ENCODE measurements at regions of chr20 and their contacts with region 1.

Region 1: DNA sequence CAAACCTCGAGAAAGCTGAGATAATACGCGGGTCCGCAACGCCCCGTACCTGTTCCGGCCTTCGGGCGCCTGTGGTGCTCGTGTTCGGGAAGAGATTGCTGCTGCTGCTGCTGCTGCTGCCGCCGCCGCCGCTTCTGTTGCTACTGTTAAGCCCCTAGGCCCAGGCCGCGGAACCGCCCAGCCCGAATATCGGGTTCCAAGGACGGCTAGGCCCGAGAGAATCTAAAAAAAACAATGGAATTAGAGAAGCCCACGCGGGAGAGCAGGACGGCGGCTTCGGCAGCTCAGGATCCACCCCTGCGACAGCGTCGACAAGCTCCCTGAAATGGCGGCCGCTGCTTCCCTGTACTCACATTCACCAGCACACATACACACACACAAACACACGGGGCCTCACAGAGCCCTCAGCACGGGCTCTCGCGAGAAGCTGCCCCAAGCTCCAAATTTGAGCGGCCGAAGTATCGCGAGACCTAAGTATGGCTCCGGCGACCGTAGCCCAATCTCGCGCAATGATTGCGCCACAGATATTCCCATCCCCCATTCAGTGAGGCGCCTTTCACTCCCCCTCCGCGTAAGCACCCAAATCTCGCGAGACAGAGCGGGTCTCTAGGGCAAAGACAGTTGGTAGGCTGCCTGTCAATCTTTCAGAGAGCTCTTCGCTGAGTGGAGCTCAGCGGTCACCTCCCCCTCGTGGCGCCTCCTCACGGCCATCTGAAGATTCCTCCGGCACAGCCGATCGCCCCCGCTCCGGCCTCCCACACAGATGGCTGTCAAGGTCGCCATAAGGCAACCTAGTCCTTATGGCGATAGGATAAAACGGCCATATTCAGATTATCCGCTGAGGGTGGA is at the start of gene RBM39:
- DNase-seq: peak; percentile 96 to 100 (median 99)
- ATAC-seq: peak; percentile 80
- H3K4me3 ChIP-seq: peak within 1 kb of the TSS; percentile 84
- H3K4me3 Mint-ChIP-seq: peak within 1 kb of the TSS; percentile 99
- H3K27ac ChIP-seq: peak within 1 kb of the TSS; percentile 99 to 100
- H3K27ac Mint-ChIP-seq: peak within 1 kb of the TSS; percentile 99
- H3K4me1 ChIP-seq: peaks cover 44% of the 10 kb centered on the region
- H3K4me1 Mint-ChIP-seq: peaks cover 56% of the 10 kb centered on the region
- H3K27me3 ChIP-seq: no peaks in the 10 kb centered on the region
- H3K27me3 Mint-ChIP-seq: no peaks in the 10 kb centered on the region
- CTCF ChIP-seq: peak; percentile 57
- total RNA-seq, gene RBM39: 1,057 to 1,091 TPM

Region 2: DNA sequence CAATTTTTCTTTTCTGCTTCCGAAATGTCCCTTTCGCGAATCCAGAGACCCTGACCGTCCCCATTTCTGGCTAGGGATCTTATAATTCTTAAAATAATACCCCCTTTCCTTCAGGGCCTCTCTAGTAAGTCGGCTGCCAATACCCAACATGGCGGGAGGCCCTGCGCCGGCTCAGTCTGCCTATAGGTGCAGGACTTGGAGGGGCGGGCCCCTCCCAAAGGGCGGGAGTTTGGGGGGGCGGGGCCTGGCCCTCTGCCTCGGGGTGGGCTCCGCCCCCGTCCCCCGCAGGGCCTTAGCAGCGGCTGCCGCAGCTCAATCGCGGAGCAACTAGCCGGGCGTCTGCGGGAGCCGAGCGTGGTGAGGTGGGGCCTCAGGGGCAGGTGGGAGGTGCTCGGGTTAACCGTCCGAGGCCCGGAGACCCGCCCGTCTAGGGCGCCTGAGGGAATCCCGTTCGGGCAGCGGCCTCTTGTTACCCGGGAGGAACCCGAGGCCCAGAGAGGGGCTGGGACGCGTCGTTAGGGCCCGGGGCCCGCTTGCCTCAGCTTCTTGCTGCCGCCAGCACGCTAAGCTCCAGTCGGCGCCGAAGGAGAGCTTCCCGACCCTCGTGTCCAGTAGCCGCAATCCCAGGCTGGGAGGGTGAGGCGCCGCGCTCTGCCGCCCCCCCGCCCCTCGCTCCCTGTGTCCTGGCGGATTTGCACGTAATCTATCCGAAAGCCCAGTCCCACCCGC is 287.1 kb before region 1 on chr20 and contains the start of gene CEP250:
- CTCF ChIA-PET with region 1: no interaction called
- POLR2A ChIA-PET with region 1: interaction called, 27 read pairs
- intact Hi-C with region 1: loop called in 1 of 2 experiments (anchors 10 kb)
- DNase-seq: peak; percentile 87 to 97 (median 94)
- ATAC-seq: peak; percentile 96
- H3K4me3 ChIP-seq: peak within 1 kb of the TSS; percentile 91
- H3K4me3 Mint-ChIP-seq: peak within 1 kb of the TSS; percentile 97
- H3K27ac ChIP-seq: peak within 1 kb of the TSS; percentile 83 to 94
- H3K27ac Mint-ChIP-seq: peak within 1 kb of the TSS; percentile 87
- H3K4me1 ChIP-seq: peaks cover 19% of the 10 kb centered on the region
- H3K4me1 Mint-ChIP-seq: peaks cover 29% of the 10 kb centered on the region
- H3K27me3 ChIP-seq: no peaks in the 10 kb centered on the region
- H3K27me3 Mint-ChIP-seq: no peaks in the 10 kb centered on the region
- CTCF ChIP-seq: no peak
- total RNA-seq, gene CEP250: 27.6 to 33.1 TPM

Region 3: DNA sequence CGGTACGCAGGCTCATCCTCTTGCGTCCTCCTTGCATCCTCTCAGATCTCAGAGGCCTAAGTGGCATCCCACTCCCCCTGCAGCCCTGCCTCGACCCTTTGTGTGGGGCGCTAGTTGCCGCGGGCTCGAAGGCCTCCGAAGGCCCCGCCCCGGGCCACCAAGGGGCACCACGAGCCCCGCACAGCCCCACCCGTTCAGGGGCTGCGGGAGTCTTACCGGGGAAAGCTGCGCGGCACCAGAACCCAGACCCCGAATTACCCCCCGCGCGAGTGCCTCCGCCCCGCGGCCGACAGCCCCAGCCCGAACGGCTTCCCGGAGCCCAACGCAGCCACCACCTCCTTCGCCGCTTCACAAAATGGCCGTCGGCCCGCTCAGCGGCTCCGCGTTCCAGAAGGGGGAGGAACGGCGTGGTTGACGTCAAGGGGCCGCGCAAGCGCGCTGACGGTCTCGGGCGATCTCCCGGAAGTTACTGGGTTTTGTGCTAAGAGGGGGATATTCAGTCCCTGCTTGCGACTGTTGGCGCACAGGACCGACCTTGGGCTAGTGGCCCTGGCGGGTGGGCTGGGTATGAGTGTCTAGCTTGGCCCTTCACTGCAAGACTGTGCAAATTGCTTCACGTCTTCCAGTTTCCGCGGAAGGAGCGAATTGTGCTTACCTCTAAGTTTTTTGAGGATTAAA is 77.4 kb before region 1 on chr20 and contains the starts of genes CPNE1 and RBM12:
- CTCF ChIA-PET with region 1: interaction called, 6 read pairs
- POLR2A ChIA-PET with region 1: interaction called, 131 read pairs
- intact Hi-C with region 1: loop called (anchors 1 to 2 kb)
- DNase-seq: peak; percentile 87 to 97 (median 92)
- ATAC-seq: peak; percentile 67
- H3K4me3 ChIP-seq: peak within 1 kb of the TSS; percentile 97
- H3K4me3 Mint-ChIP-seq: peak within 1 kb of the TSS; percentile 89
- H3K27ac ChIP-seq: peak within 1 kb of the TSS; percentile 99
- H3K27ac Mint-ChIP-seq: peak within 1 kb of the TSS; percentile 99
- H3K4me1 ChIP-seq: peaks cover 37% of the 10 kb centered on the region
- H3K4me1 Mint-ChIP-seq: peaks cover 49% of the 10 kb centered on the region
- H3K27me3 ChIP-seq: no peaks in the 10 kb centered on the region
- H3K27me3 Mint-ChIP-seq: no peaks in the 10 kb centered on the region
- CTCF ChIP-seq: no peak
- total RNA-seq, gene CPNE1: 146 to 153 TPM
- total RNA-seq, gene RBM12: 91.7 to 95.2 TPM

Region 4: DNA sequence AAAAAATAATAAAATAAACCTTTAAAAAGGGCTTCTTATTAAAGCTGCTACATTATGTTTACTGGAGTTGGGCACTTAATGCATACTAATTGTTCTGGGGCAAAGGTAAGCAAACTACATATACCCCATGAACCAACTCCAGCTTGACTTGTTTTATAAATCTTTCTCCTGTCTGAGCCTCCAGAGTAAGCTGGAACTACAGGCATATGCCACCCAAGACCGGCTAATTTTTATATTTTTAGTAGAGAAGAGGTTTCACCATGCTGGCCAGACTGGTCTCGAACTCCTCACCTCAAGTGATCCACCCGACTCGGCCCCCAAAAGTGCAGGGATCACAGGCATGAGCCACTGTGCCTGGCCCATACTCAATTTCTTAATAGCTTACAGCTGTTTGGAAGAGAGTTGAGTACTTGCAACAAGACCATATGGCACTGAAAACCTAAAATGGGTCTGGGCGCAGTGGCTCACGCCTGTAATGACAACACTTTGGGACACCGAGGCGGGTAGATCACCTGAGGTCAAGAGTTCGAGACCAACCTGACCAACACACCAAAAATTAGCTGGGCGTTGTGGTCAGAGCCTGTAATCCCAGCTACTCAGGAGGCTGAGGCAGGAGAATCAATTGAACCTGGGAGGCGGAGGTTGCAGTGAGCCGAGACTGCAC is 23.0 kb before region 1 on chr20:
- CTCF ChIA-PET with region 1: interaction called, 6 read pairs
- POLR2A ChIA-PET with region 1: interaction called, 32 read pairs
- intact Hi-C with region 1: no loop called
- DNase-seq: no peak
- ATAC-seq: no peak
- H3K4me3 ChIP-seq: no peak overlapping the region
- H3K4me3 Mint-ChIP-seq: no peak overlapping the region
- H3K27ac ChIP-seq: no peak overlapping the region
- H3K27ac Mint-ChIP-seq: peak overlapping the region; percentile 27
- H3K4me1 ChIP-seq: peaks cover 53% of the 10 kb centered on the region
- H3K4me1 Mint-ChIP-seq: peaks cover 51% of the 10 kb centered on the region
- H3K27me3 ChIP-seq: no peaks in the 10 kb centered on the region
- H3K27me3 Mint-ChIP-seq: no peaks in the 10 kb centered on the region
- CTCF ChIP-seq: no peak

Region 5: GRCh38 chr20:35771689-35772562 is 29.8 kb after region 1 on chr20 and contains the start of gene PHF20:
- CTCF ChIA-PET with region 1: interaction called, 32 read pairs
- POLR2A ChIA-PET with region 1: interaction called, 891 read pairs
- intact Hi-C with region 1: loop called (anchors 1 kb)
- DNase-seq: peak; percentile 100
- ATAC-seq: peak; percentile 84
- H3K4me3 ChIP-seq: peak within 1 kb of the TSS; percentile 79
- H3K4me3 Mint-ChIP-seq: peak within 1 kb of the TSS; percentile 97
- H3K27ac ChIP-seq: peak within 1 kb of the TSS; percentile 86 to 96
- H3K27ac Mint-ChIP-seq: peak within 1 kb of the TSS; percentile 96
- H3K4me1 ChIP-seq: peaks cover 84% of the 10 kb centered on the region
- H3K4me1 Mint-ChIP-seq: peaks cover 75% of the 10 kb centered on the region
- H3K27me3 ChIP-seq: no peaks in the 10 kb centered on the region
- H3K27me3 Mint-ChIP-seq: no peaks in the 10 kb centered on the region
- CTCF ChIP-seq: no peak
- total RNA-seq, gene PHF20: 119 to 126 TPM

Region 6: GRCh38 chr20:35839904-35840303 is 97.8 kb after region 1 on chr20:
- CTCF ChIA-PET with region 1: no interaction called
- POLR2A ChIA-PET with region 1: interaction called, 12 read pairs
- intact Hi-C with region 1: no loop called
- DNase-seq: peak in 1 of 14 experiments; percentile 23
- ATAC-seq: peak; percentile 65
- H3K4me3 ChIP-seq: no peak overlapping the region
- H3K4me3 Mint-ChIP-seq: peak overlapping the region; percentile 32
- H3K27ac ChIP-seq: peak overlapping the region in 1 of 2 donors; percentile 26
- H3K27ac Mint-ChIP-seq: peak overlapping the region; percentile 50
- H3K4me1 ChIP-seq: peaks cover 14% of the 10 kb centered on the region
- H3K4me1 Mint-ChIP-seq: peaks cover 55% of the 10 kb centered on the region
- H3K27me3 ChIP-seq: no peaks in the 10 kb centered on the region
- H3K27me3 Mint-ChIP-seq: no peaks in the 10 kb centered on the region
- CTCF ChIP-seq: no peak